GM12878 (cell line): ENCODE measurements at regions of chr7 and their contacts with region 1.

Region 1: DNA sequence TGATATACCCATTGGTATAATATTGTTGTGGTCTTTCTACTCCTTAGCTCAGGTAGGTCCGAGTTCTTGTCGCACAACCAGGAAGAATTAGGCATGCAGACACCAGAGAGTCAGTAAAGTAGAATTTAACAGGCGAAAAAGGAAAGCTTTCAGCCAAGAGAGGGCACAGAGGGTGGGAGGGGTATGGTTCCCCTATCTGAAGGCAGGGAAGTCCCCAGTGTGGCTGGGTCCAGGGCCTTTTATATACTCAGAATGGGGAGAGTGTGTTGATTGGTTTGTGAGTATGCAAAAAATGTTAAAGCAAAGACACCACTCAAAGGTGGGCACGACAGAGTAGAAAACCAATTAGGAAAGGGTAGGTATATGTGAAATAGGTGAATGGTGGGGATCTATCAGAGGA is 53.9 kb downstream of the IMMP2L start:
- DNase-seq: no peak
- ATAC-seq: peak; percentile 98
- H3K4me3 ChIP-seq: no peak overlapping the region
- H3K27ac ChIP-seq: no peak overlapping the region
- H3K4me1 ChIP-seq: no peaks in the 10 kb centered on the region
- H3K27me3 ChIP-seq: no peaks in the 10 kb centered on the region
- CTCF ChIP-seq: no peak
- EP300 ChIP-seq: no peak
- POLR2A ChIP-seq: no peak
- RAD21 ChIP-seq: no peak

Region 2: GRCh38 chr7:111527545-111527944 is 19.2 kb after region 1 on chr7:
- CTCF ChIA-PET with region 1: interaction called, 5 read pairs
- POLR2A ChIA-PET with region 1: no interaction called
- RAD21 ChIA-PET with region 1: interaction called, 3 read pairs
- SMC1A ChIA-PET with region 1: interaction called, 15 read pairs
- in situ Hi-C with region 1: no loop called
- intact Hi-C with region 1: no loop called
- DNase-seq: peak; percentile 40
- ATAC-seq: peak; percentile 88
- H3K4me3 ChIP-seq: peak overlapping the region; percentile 28; the same call in 1 of the 2 replicates
- H3K27ac ChIP-seq: peak overlapping the region; percentile 3; the same call in 1 of the 2 replicates
- H3K4me1 ChIP-seq: peaks cover 25% of the 10 kb centered on the region
- H3K27me3 ChIP-seq: no peaks in the 10 kb centered on the region
- CTCF ChIP-seq: no peak
- EP300 ChIP-seq: peak; percentile 49 to 72; a peak in 2 of 4 replicates
- POLR2A ChIP-seq: no peak
- RAD21 ChIP-seq: peak; percentile 25; the same call in 1 of the 2 replicates

Region 3: GRCh38 chr7:111532625-111533024 is 24.2 kb after region 1 on chr7:
- CTCF ChIA-PET with region 1: interaction called, 5 read pairs
- POLR2A ChIA-PET with region 1: no interaction called
- RAD21 ChIA-PET with region 1: interaction called, 3 read pairs
- SMC1A ChIA-PET with region 1: interaction called, 15 read pairs
- in situ Hi-C with region 1: no loop called
- intact Hi-C with region 1: no loop called
- DNase-seq: no peak
- ATAC-seq: no peak
- H3K4me3 ChIP-seq: no peak overlapping the region
- H3K27ac ChIP-seq: no peak overlapping the region
- H3K4me1 ChIP-seq: peaks cover 18% of the 10 kb centered on the region
- H3K27me3 ChIP-seq: no peaks in the 10 kb centered on the region
- CTCF ChIP-seq: no peak
- EP300 ChIP-seq: no peak
- POLR2A ChIP-seq: no peak
- RAD21 ChIP-seq: no peak

Region 4: DNA sequence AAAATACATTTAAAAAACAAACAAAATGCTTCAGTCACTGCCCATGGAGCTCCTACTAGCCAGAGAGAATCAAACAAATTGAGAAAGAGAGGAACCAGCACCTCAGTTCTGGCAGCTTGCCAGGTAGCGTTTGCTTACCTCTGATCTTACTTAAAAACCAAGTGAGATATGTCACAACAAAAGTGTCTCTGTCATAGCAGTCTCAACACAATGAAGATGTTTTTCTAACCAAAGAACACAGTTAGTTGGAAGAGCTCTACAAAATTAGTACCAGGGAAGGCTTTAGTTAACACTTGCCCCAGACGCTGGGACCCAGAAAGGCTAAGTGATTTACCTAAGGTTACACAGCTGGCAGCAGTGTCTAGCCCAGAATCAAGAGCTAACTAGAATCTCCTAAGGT is 694.4 kb after region 1 on chr7:
- CTCF ChIA-PET with region 1: no interaction called
- POLR2A ChIA-PET with region 1: no interaction called
- RAD21 ChIA-PET with region 1: no interaction called
- SMC1A ChIA-PET with region 1: no interaction called
- in situ Hi-C with region 1: no loop called
- intact Hi-C with region 1: no loop called
- DNase-seq: no peak
- ATAC-seq: no peak
- H3K4me3 ChIP-seq: no peak overlapping the region
- H3K27ac ChIP-seq: no peak overlapping the region
- H3K4me1 ChIP-seq: no peaks in the 10 kb centered on the region; the same call in 1 of the 2 replicates
- H3K27me3 ChIP-seq: no peaks in the 10 kb centered on the region
- CTCF ChIP-seq: no peak
- EP300 ChIP-seq: no peak
- POLR2A ChIP-seq: no peak
- RAD21 ChIP-seq: no peak

Region 5: DNA sequence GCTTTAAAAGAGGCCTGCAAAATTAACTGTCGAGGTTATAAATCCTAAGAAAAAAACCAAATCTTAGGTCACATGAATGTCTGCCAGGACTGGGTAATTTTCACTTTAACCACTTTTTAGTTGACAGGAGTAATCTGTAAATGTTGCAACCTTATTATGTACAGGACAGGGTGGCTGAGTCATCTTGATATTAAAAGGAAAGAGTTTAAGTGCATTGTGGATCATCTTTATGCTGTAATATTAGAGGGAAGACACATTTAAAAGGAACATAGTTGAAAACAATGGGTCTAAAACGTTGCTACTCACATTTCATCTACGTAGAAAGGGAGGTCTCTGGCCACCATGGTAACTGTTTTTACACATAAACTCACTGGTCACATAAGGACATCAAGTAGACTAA is 1087.9 kb after region 1 on chr7:
- CTCF ChIA-PET with region 1: no interaction called
- POLR2A ChIA-PET with region 1: no interaction called
- RAD21 ChIA-PET with region 1: no interaction called
- SMC1A ChIA-PET with region 1: no interaction called
- in situ Hi-C with region 1: no loop called
- intact Hi-C with region 1: no loop called
- DNase-seq: no peak
- ATAC-seq: no peak
- H3K4me3 ChIP-seq: no peak overlapping the region
- H3K27ac ChIP-seq: no peak overlapping the region
- H3K4me1 ChIP-seq: no peaks in the 10 kb centered on the region
- H3K27me3 ChIP-seq: no peaks in the 10 kb centered on the region
- CTCF ChIP-seq: no peak
- EP300 ChIP-seq: no peak
- POLR2A ChIP-seq: no peak
- RAD21 ChIP-seq: no peak